ENCODE measurements at regions of chr22 and their contacts with region 1.

Region 1: GRCh38 chr22:36470162-36470993 is 11.1 kb downstream of the TXN2 start:
- DNase-seq: peak; percentile 89 to 90
- ATAC-seq: peak; percentile 88
- H3K4me3 ChIP-seq: no peak overlapping the region
- H3K27ac ChIP-seq: peak overlapping the region in 1 of 2 donors; percentile 90
- H3K4me1 ChIP-seq: no peaks in the 10 kb centered on the region
- H3K27me3 ChIP-seq: no peaks in the 10 kb centered on the region

Region 2: GRCh38 chr22:36301384-36301828 is 169.0 kb before region 1 on chr22:
- intact Hi-C with region 1: loop called (anchors 5 kb)
- DNase-seq: peak; percentile 78 to 90
- ATAC-seq: peak; percentile 72
- H3K4me3 ChIP-seq: no peak overlapping the region
- H3K27ac ChIP-seq: no peak overlapping the region
- H3K4me1 ChIP-seq: no peaks in the 10 kb centered on the region
- H3K27me3 ChIP-seq: no peaks in the 10 kb centered on the region

Region 3: DNA sequence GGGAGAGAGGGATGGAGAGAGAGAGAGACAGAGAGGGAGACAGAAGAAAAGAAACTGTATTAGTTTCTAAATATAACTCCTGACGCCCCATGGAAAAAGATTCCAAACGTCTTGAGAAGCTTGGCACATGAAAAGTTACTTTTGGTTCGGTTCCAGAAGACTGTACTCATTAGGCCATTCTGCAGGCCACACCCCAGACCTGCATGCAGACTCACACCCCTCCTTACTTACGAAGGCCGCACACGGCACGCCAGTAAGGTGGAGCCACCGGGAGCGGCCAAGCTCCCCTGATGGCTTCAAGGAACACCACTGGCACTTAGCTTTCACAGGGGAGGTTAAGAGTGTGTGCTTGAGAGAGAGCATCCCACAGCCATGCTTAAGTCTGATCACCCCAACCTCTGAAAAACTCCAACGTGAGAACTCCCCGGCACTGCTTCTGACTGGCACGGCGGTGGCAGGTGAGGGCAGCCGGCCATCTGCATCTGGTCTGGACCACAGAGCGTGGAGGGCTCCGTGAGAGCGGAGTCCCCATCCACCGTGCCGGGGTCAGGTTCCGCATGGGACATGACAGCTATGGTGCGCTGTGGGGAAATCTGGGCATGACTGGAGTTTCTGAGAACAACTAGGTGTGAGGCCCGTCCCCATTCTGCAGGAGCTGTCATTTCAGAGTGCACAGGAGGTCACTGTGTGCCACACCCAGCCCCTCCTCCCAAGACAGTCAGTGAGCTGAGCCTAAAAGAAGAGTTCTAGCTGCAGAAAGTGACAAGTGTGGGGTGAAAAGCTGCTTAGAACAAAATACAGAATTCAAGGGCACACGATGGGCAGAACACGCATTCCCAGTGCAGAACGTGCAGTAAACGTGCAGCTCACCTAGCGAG is 145.0 kb before region 1 on chr22:
- intact Hi-C with region 1: loop called (anchors 2 to 5 kb)
- DNase-seq: peak; percentile 83 to 90
- ATAC-seq: peak; percentile 58
- H3K4me3 ChIP-seq: no peak overlapping the region
- H3K27ac ChIP-seq: peak overlapping the region; percentile 99
- H3K4me1 ChIP-seq: peaks cover 2 to 3% of the 10 kb centered on the region in 2 donors
- H3K27me3 ChIP-seq: no peaks in the 10 kb centered on the region

Region 4: DNA sequence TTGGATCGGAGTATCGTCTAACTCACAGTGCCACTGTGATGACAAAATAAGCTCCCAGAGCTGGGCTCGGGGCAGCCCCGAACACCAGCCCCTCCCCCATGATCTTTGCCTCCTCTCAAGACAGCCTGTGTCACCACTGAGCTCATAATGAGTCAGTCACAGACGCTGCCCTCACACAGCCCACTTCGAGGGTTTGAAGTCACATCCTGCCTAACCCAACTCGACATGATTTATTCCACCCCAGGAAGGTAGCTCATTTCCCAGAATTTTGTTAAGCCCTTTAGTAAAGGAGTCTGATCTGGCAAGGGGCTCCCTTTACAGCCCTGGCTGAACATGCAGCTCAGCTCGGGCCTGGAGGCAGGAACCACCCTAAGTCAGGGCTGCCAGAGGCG is 105.4 kb before region 1 on chr22:
- intact Hi-C with region 1: loop called in 1 of 2 experiments (anchors 5 kb)
- DNase-seq: peak; percentile 89 to 91
- ATAC-seq: peak; percentile 79
- H3K4me3 ChIP-seq: no peak overlapping the region
- H3K27ac ChIP-seq: peak overlapping the region; percentile 48 to 88
- H3K4me1 ChIP-seq: peaks cover 7 to 18% of the 10 kb centered on the region in 2 donors
- H3K27me3 ChIP-seq: no peaks in the 10 kb centered on the region

Region 5: DNA sequence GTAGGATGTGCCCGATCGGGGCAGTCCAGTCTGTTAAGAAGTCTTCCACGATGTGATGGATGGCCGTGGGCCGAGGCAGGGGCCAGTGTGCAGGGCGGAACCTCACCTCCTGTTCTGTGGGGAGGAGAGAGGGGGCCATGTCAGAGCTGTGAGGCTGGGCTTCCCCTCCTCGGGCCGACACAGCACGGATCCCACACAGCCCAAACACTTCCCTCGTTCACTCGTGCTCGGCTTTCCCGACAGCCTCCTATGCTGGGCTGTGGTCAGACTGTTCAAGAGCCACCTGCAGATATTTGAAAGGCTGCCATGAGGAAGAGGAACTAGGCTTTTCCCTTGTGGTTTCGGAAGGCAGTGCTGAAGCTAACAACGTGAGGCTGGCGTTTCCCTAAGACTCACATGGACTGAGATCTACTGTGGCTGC is 23.3 kb after region 1 on chr22:
- intact Hi-C with region 1: no loop called
- DNase-seq: peak in 1 of 2 donors; percentile 85
- ATAC-seq: peak; percentile 34
- H3K4me3 ChIP-seq: no peak overlapping the region
- H3K27ac ChIP-seq: no peak overlapping the region
- H3K4me1 ChIP-seq: no peaks in the 10 kb centered on the region
- H3K27me3 ChIP-seq: no peaks in the 10 kb centered on the region

Measured in aorta (tissue), 5 donors.